Ovary (tissue), 10 donors: ENCODE measurements at regions of chr4 and their contacts with region 1.

Region 1: DNA sequence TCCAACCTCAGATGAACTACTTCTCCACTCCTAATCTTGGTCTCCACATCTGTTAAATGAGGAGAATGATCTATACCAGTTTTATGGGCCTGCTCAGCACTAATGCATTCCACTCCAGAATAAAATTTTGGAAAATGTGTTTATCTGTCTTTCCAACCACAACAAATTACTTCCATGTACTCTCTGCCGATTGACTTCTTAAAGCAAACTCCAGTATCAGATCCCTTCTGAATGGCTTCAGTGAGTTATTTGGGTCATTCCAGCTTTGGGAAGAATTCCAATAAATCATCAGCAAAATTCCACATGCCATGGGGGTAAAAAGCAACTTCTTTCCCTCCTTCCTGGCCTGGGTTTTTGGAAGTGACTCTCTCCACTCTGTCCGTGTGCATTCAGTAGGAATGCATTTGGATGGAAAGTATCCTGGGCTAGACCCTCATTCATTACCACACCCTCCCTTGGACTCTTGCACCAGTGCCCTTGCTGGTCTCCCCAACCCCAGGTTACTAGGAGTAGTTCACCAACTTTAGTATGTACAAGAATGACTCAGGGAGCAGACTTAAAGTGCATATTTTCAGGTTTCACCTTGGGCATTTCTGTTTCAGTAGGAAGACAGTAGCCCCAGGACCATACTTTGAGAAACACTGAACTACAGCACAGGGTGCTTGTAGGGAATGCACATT is 15.4 kb upstream of the ADH6 start:
- DNase-seq: no peak
- H3K4me3 ChIP-seq: no peak overlapping the region
- H3K27ac ChIP-seq: no peak overlapping the region
- H3K4me1 ChIP-seq: no peaks in the 10 kb centered on the region
- H3K27me3 ChIP-seq: no peaks in the 10 kb centered on the region
- CTCF ChIP-seq: no peak
- EP300 ChIP-seq: no peak
- POLR2A ChIP-seq: no peak

Region 2: DNA sequence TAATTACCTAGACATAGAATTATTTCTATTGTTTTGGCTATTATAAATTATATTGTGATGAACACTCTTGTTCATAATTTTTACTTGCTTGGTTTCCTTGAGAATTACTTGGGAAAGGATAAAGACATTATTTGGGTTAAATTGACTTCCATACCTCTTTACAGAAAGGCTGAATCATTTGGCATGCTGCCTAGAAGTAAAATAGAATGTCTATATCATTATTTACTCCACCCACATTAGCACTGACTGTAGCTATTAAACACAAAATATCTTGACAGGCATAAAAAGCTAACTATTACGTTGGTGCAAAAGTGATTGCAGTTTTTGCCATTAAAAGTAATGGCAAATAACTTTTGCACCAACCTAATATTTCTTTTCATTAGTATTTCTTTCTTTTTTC is 14.2 kb after region 1 on chr4:
- intact Hi-C with region 1: loop called in 1 of 4 experiments (anchors 2 kb)
- DNase-seq: no peak
- H3K4me3 ChIP-seq: no peak overlapping the region
- H3K27ac ChIP-seq: no peak overlapping the region
- H3K4me1 ChIP-seq: no peaks in the 10 kb centered on the region
- H3K27me3 ChIP-seq: no peaks in the 10 kb centered on the region
- CTCF ChIP-seq: no peak
- EP300 ChIP-seq: no peak
- POLR2A ChIP-seq: no peak

Region 3: DNA sequence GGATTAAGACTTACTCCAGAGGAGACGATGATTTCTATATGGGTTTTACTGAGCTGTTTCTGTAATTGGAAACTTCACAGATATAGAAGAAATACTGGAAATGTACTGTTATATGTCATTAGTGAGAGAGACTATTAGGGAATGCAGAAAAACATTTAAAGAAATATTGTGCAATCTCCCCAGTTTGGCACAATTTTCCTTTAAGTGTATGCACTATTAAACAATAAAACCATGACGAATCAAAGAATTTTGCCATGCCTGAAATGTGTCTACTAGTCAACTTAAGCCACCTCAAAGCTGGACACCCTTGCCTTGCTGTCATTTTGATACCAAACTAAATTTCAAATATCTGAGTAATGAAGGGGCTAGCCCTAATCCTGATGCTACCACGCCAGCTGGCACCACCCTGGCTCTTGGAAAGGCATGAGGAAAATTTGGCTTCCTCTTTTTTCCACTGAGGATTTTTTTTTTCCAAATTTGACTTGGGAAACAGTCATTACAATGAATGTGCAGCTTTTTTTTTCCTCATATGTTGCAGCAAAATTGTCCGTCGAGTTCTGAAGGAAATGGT is 376.2 kb after region 1 on chr4:
- intact Hi-C with region 1: no loop called
- DNase-seq: no peak
- H3K4me3 ChIP-seq: no peak overlapping the region
- H3K27ac ChIP-seq: no peak overlapping the region
- H3K4me1 ChIP-seq: no peaks in the 10 kb centered on the region
- H3K27me3 ChIP-seq: no peaks in the 10 kb centered on the region
- CTCF ChIP-seq: no peak
- EP300 ChIP-seq: no peak
- POLR2A ChIP-seq: no peak

Region 4: GRCh38 chr4:100742045-100742444 is 1507.6 kb after region 1 on chr4:
- intact Hi-C with region 1: loop called in 1 of 4 experiments (anchors 10 kb)
- DNase-seq: no peak
- H3K4me3 ChIP-seq: no peak overlapping the region
- H3K27ac ChIP-seq: no peak overlapping the region
- H3K4me1 ChIP-seq: no peaks in the 10 kb centered on the region
- H3K27me3 ChIP-seq: no peaks in the 10 kb centered on the region
- CTCF ChIP-seq: no peak
- EP300 ChIP-seq: no peak
- POLR2A ChIP-seq: no peak